ENCODE measurements at regions of chr6 and their contacts with region 1.

Region 1: DNA sequence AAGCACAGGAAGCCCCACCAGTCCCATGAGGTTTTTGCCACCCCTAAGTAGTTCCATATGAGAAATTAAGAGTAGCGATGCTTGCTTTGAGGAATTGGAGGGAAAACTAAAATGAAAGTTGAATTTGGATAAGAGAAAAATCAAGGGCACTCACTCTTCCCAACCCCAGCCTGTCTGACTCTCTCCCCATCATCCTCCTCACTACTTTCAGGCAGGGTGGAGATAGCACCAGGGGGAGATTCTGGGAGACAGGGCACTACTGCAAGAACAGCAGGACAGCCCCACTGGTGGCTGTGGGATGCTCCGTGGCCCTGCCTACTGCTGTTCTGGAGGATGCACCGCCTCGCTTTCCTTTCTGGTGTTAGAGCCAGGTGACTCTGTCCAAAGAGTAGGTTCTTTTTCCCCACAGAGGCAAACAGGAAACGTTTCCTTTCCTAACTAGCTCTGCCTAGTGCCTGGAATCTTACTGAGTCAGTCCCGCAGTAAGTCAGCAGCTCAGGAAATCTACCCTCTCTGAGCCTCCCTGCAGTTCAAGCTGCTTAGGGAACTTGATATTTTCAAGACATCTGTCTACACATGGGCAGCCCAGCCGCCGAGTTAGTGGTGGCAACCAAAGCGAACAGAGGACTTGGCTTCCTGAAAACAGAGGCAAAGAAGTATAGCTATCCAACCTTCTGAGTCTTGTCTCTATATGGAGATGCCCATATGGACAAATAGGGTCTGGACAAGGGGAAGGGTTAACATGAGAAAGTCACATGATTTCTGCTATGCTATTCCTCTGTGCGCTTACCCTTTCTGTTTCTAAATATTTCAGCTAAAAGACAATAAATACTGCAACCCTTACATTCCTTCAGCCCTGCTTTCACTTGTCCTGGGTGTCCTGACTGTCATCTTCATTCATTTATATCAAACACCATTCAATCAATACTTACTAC is 11.4 kb downstream of the HLA-E start:
- DNase-seq: no peak
- ATAC-seq: peak; percentile 32
- H3K4me3 Mint-ChIP-seq: peak overlapping the region; percentile 67
- H3K27ac Mint-ChIP-seq: peak overlapping the region; percentile 79
- H3K4me1 Mint-ChIP-seq: peaks cover 46% of the 10 kb centered on the region
- H3K27me3 Mint-ChIP-seq: no peaks in the 10 kb centered on the region
- CTCF ChIP-seq: no peak

Region 2: DNA sequence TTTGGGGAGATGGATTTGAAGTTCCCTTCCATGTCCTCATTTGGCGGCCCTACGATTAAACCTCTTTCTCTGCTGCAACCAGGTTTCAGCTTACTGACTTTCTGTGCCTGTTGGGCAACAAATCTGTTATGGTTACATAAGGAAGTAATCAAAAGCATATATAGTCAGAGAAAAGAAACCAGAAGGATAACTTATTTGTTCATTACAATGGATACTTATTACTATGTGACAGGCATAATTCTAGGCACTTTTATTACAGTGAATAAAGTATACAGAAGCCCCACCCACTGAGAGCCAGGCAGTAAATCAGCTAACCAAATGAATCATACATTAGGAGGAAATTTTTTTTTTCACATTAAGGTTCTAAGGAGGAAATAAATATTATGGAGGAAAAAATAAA is 378.2 kb before region 1 on chr6:
- CTCF ChIA-PET with region 1: no interaction called
- POLR2A ChIA-PET with region 1: no interaction called
- intact Hi-C with region 1: no loop called
- DNase-seq: no peak
- ATAC-seq: no peak
- H3K4me3 Mint-ChIP-seq: no peak overlapping the region
- H3K27ac Mint-ChIP-seq: no peak overlapping the region
- H3K4me1 Mint-ChIP-seq: no peaks in the 10 kb centered on the region
- H3K27me3 Mint-ChIP-seq: peaks cover 26% of the 10 kb centered on the region
- CTCF ChIP-seq: no peak

Region 3: DNA sequence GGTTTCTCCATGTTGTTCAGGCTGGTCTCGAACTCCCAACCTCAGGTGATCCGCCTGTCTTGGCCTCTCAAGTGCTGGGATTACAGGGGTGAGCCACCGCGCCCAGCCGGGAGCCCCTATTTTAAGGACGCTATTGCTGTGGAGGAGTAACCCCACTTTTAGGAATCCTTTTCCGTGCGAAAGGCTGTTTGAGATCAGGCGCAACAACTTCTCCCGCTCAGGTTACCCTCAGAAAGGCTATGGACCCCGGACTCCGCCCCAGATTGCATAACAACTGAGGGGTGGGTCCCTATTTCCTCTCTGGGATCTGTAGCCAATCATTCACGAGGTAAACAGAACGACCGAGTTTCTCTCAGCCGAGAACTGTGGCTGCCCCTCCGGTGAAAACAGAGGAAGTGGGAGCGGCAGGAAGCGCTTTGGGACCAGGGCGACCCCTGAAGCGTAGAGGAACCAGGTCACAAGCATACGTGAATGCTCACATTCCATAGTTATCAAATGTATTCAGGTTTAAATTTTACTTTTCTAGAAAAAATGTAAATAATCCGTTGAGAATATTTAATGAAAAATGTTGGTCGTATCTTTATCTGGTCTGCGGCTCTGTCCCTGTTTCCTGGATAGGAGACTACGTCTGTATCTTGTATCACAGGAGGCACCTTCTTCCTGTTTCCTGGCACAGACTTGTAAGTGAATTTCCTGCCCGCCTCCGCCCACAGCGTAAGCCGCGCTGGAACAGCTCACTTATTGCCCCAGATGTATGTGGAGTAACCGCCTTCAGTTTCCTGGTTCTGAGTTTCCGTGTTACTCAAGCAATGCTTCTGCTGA is 15.5 kb after region 1 on chr6:
- CTCF ChIA-PET with region 1: interaction called, 11 read pairs
- POLR2A ChIA-PET with region 1: interaction called, 251 read pairs
- intact Hi-C with region 1: no loop called
- DNase-seq: peak; percentile 98
- ATAC-seq: peak; percentile 89
- H3K4me3 Mint-ChIP-seq: peak overlapping the region; percentile 79
- H3K27ac Mint-ChIP-seq: peak overlapping the region; percentile 97
- H3K4me1 Mint-ChIP-seq: peaks cover 47% of the 10 kb centered on the region
- H3K27me3 Mint-ChIP-seq: no peaks in the 10 kb centered on the region
- CTCF ChIP-seq: no peak

Region 4: DNA sequence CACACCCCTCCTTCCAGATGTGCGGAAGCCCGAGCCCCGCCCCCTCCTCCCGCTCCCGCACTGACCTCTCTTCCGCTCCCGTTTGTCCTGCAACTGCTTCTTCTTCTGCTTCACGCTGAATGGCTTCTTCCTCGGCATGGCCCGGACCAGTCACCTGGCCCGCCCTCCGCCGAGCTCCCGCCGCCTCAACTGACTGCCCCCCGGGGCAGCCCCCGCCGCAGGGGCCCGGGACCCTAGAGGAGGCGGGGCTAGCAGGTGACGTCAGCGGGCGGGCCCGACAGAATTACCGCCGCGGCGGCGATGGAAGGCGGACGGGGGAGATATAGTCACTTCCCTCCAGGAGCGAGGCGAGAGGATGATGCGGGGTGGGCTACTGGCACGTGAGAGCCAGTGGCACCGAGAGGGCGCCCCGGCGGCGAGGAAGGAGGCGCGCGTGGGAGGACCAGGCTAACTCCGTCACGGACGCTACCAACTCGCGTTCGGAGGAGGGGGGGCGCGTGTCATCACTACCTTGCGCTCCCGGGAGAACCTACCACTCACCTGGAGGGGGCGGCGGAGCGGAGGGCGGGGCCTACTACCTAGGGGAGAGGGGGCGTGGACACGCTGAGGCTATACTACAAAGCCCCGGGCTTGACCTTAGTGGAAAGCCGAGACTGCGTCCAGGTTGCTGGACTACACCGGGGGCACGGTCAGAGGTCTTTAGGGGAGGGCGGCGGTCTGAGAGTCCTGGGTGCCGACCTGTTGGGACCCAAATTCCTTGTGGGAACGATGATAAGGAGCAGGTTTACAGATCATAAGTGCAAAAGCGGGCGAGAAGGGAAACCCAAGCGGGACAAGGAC is 55.6 kb after region 1 on chr6 and contains the start of gene GNL1:
- CTCF ChIA-PET with region 1: no interaction called
- POLR2A ChIA-PET with region 1: no interaction called
- intact Hi-C with region 1: no loop called
- DNase-seq: peak; percentile 100
- ATAC-seq: peak; percentile 93
- H3K4me3 Mint-ChIP-seq: peak within 1 kb of the TSS; percentile 91
- H3K27ac Mint-ChIP-seq: peak within 1 kb of the TSS; percentile 99
- H3K4me1 Mint-ChIP-seq: peaks cover 35% of the 10 kb centered on the region
- H3K27me3 Mint-ChIP-seq: no peaks in the 10 kb centered on the region
- CTCF ChIP-seq: no peak
- total RNA-seq, gene GNL1: 107 to 122 TPM